Psoas muscle (tissue), 8 donors: ENCODE measurements at regions of chr15 and their contacts with region 1.

Region 1: DNA sequence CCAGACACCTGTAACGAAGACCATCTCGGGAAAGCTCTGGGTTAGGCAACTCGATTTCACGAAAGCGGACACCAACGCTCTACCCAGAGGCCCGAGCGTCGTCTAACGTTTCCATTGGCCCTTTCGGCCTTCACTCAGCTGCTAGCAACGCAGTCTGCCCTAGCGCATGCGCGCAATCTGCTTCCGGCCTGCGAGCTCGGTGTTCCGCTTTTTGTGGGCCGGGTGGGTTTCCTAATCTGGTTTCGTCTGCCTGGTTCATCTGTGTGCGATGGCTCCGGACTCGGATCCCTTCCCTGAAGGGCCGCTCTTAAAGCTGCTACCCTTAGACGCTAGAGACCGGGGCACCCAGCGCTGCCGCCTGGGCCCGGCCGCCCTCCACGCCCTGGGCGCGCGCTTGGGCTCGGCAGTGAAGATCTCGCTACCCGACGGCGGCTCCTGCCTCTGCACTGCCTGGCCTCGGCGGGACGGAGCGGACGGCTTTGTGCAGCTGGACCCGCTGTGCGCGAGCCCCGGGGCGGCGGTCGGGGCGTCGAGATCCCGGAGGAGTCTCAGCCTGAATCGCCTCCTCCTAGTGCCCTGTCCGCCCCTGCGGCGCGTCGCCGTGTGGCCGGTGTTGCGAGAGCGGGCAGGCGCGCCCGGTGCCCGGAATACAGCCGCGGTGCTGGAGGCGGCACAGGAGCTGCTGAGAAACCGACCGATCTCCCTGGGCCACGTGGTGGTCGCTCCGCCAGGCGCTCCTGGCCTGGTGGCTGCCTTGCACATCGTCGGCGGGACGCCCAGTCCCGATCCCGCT is 24.0 kb upstream of the GATM start:
- DNase-seq: peak; percentile 97 to 99
- ATAC-seq: peak; percentile 96 to 97 (median 97)
- H3K4me3 ChIP-seq: peak overlapping the region; percentile 88
- H3K27ac ChIP-seq: peak overlapping the region; percentile 94
- H3K4me1 ChIP-seq: peaks cover 27% of the 10 kb centered on the region
- H3K27me3 ChIP-seq: no peaks in the 10 kb centered on the region
- CTCF ChIP-seq: no peak

Region 2: DNA sequence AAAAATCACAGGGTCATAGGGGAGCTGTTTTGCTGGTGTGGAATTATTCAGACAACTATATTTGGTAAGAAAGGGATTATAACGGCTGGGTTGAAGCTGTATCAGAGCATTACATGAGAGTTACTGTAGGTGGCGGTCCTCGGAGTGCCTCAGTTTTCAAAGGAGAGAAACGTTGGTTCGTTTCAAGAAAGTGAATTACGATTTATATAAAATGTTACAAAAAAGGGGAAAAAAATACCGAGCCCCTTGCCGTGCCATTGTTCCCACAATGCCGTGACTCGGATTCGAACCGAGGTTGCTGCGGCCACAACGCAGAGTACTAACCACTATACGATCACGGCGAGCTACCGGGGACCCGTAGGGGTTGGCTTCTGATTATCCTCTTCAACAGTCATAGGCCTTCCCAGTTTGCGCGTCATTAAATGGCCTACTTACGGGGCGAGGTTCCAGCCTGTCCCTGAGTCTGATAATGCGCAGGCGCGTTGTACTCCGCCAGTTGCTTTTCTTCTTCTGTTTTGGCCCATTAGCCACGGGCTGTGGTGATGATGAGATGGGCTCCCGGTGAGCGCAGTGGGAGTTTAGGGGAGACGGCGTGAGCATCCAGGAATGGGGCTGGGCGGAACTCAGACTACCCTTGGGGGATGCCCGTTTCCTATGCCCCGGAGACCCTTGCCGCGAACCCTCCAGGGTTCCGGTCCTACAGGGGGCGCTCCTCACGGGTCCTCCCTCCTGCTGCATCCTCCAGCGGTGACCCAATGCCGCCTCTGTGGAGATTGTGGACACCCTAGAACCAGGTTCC is 203.8 kb before region 1 on chr15:
- intact Hi-C with region 1: loop called (anchors 2 to 5 kb)
- DNase-seq: peak; percentile 92 to 96
- ATAC-seq: peak; percentile 79 to 83 (median 81)
- H3K4me3 ChIP-seq: peak overlapping the region; percentile 91
- H3K27ac ChIP-seq: peak overlapping the region; percentile 99
- H3K4me1 ChIP-seq: peaks cover 3% of the 10 kb centered on the region
- H3K27me3 ChIP-seq: no peaks in the 10 kb centered on the region
- CTCF ChIP-seq: peak; percentile 68

Region 3: GRCh38 chr15:45307230-45307924 is 95.0 kb before region 1 on chr15:
- intact Hi-C with region 1: loop called in 1 of 2 experiments (anchors 1 kb)
- DNase-seq: no peak
- ATAC-seq: no peak
- H3K4me3 ChIP-seq: no peak overlapping the region
- H3K27ac ChIP-seq: no peak overlapping the region
- H3K4me1 ChIP-seq: no peaks in the 10 kb centered on the region
- H3K27me3 ChIP-seq: no peaks in the 10 kb centered on the region
- CTCF ChIP-seq: peak; percentile 38

Region 4: DNA sequence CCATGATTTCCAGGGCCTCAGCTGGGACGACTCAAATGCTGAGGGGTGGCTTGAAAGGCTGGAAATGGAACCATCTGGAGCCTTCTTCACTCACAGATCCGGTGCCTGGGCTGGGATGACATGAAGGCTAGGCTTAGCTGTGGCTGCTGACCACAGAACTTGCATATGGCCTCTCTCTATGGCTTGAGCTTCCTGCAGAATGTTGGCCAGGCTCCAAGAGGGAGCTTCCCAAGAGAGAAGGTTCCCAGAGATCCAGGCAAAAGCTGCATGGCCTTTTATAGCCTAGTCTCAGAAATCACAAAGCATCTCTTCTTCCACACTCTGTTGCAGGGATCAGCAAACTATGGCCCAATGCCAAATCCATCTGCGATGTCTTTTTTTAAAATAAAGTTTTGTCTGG is 68.8 kb before region 1 on chr15:
- intact Hi-C with region 1: no loop called
- DNase-seq: peak; percentile 37 to 70
- ATAC-seq: peak in 2 of 4 donors; percentile 26 to 48
- H3K4me3 ChIP-seq: no peak overlapping the region
- H3K27ac ChIP-seq: no peak overlapping the region
- H3K4me1 ChIP-seq: no peaks in the 10 kb centered on the region
- H3K27me3 ChIP-seq: no peaks in the 10 kb centered on the region
- CTCF ChIP-seq: no peak

Region 5: GRCh38 chr15:45372041-45372995 is 30.0 kb before region 1 on chr15:
- intact Hi-C with region 1: loop called in 1 of 2 experiments (anchors 2 kb)
- DNase-seq: no peak
- ATAC-seq: no peak
- H3K4me3 ChIP-seq: no peak overlapping the region
- H3K27ac ChIP-seq: no peak overlapping the region
- H3K4me1 ChIP-seq: peaks cover 16% of the 10 kb centered on the region
- H3K27me3 ChIP-seq: no peaks in the 10 kb centered on the region
- CTCF ChIP-seq: no peak

Region 6: GRCh38 chr15:45414215-45414885 is 12.0 kb after region 1 on chr15:
- intact Hi-C with region 1: no loop called
- DNase-seq: no peak
- ATAC-seq: no peak
- H3K4me3 ChIP-seq: no peak overlapping the region
- H3K27ac ChIP-seq: no peak overlapping the region
- H3K4me1 ChIP-seq: no peaks in the 10 kb centered on the region
- H3K27me3 ChIP-seq: no peaks in the 10 kb centered on the region
- CTCF ChIP-seq: no peak

Region 7: DNA sequence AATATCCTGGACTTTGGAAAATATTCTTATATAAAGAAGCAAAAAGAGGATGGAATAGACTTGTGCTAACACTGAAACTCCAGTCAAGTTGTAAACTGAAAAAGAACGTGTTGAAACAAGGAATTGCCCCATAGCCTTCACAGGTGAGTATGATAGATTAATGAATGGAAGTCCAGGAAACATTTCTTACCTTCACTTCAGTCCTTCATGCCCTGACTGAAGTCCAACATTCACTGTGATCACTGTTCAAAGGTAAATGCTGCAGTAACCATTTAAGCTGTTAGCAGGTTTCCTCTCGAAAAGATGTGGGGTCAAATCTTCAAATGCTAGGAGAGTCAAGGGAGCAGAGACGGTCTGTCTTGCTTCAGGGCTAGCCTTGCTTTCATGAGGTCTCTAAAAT is 74.1 kb after region 1 on chr15:
- intact Hi-C with region 1: no loop called
- DNase-seq: no peak
- ATAC-seq: no peak
- H3K4me3 ChIP-seq: no peak overlapping the region
- H3K27ac ChIP-seq: no peak overlapping the region
- H3K4me1 ChIP-seq: no peaks in the 10 kb centered on the region
- H3K27me3 ChIP-seq: peaks cover 0 to 3% (median 2%) of the 10 kb centered on the region in 3 donors
- CTCF ChIP-seq: no peak

Region 8: DNA sequence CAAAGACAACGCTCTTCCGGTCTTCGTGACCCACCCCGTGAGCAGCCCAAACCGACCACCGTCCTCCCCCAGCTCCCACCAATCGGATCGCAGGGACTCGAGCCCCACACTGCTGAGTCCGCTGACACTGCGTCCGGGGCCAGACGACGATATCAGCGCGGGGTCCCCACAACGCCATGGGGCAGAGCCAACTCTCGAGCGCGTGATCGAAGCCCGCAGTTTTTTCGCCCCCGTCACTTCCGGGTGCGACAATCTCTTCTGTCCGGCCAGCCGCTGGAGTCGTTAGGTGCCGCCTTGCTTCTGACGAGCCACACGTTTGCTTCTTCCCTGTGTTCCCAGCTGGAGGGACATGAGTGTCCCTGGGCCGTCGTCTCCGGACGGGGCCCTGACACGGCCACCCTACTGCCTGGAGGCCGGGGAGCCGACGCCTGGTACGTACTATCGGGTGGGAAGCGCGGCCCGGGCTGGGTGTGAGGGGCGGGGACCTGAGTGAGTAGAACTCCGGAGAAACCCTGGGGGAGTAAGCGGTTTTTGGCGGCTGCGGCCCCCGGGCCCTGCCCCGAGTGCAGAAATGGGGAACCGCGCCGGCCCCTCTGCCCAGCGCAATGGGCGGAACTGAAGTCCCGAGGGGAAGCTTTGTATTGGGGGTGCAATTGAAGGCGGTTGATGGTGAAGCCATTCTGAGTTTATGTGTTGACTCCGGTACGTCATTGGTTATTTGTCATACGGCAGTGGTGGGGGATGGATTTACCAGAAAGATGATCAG is 184.9 kb after region 1 on chr15 and contains the start of gene BLOC1S6:
- intact Hi-C with region 1: loop called (anchors 2 to 5 kb)
- DNase-seq: peak; percentile 93 to 95
- ATAC-seq: peak; percentile 87 to 95 (median 93)
- H3K4me3 ChIP-seq: peak within 1 kb of the TSS; percentile 95
- H3K27ac ChIP-seq: peak within 1 kb of the TSS; percentile 97
- H3K4me1 ChIP-seq: peaks cover 37% of the 10 kb centered on the region
- H3K27me3 ChIP-seq: no peaks in the 10 kb centered on the region
- CTCF ChIP-seq: no peak
- total RNA-seq, gene BLOC1S6: 23.7 to 55.2 (median 30.3) TPM